K562 (cell line): ENCODE measurements at regions of chr17 and their contacts with region 1.

Region 1: DNA sequence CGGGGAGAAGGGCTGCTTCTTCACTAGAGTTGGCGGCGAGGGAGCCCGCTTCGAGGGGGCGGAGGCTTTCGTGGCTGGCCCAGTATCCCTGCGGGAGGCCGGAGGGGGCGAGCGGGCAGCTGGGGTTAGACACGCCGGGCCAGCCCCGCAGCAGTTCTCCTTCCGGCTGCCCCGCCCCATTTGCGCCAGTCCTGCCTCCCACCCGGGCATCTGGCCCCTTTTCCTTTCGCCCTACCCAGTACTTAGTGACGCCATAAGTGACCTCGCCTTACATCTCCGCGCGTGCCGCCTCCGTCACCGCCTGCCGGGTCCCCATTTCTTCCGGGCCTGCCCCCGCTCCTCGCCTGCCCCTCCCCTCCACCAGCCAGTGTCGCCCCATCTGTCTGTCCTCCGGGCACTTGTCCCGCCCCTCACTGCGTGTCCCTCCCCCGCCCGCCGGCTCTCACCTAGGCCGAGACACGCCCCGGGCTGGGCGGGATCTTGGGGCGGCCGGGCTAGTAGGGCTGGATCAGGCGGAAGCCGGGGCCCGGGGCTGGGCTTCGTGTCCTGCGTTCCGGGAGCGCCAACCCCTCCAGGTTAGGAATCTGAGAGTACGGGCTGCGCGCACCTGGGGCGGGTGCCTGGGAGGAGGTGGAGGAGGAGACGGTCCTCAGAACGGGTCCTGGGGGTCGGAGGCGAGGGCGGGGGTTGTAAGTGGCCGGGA is 14.3 kb downstream of the SPATA32 start:
- DNase-seq: peak; percentile 97 to 99 (median 98)
- ATAC-seq: peak; percentile 94
- H3K4me3 ChIP-seq: peak overlapping the region; percentile 78
- H3K27ac ChIP-seq: peak overlapping the region; percentile 78
- H3K4me1 ChIP-seq: peaks cover 33 to 65% of the 10 kb centered on the region in 2 experiments
- H3K27me3 ChIP-seq: no peaks in the 10 kb centered on the region
- CTCF ChIP-seq: no peak
- EP300 ChIP-seq: no peak
- POLR2A ChIP-seq: peak; percentile 90
- RAD21 ChIP-seq: no peak

Region 2: GRCh38 chr17:45260204-45260783 is 12.7 kb after region 1 on chr17:
- CTCF ChIA-PET with region 1: no interaction called
- POLR2A ChIA-PET with region 1: interaction called, 10 read pairs
- in situ Hi-C with region 1: no loop called
- intact Hi-C with region 1: no loop called
- DNase-seq: no peak
- ATAC-seq: no peak
- H3K4me3 ChIP-seq: no peak overlapping the region
- H3K27ac ChIP-seq: no peak overlapping the region
- H3K4me1 ChIP-seq: peaks cover 5 to 37% of the 10 kb centered on the region in 2 experiments; a peak in 3 of 5 replicates
- H3K27me3 ChIP-seq: no peaks in the 10 kb centered on the region
- CTCF ChIP-seq: no peak
- EP300 ChIP-seq: no peak
- POLR2A ChIP-seq: no peak
- RAD21 ChIP-seq: no peak

Region 3: GRCh38 chr17:45440155-45440778 is 192.7 kb after region 1 on chr17:
- CTCF ChIA-PET with region 1: no interaction called
- POLR2A ChIA-PET with region 1: no interaction called
- in situ Hi-C with region 1: no loop called
- intact Hi-C with region 1: no loop called
- DNase-seq: peak in 2 of 4 experiments; percentile 18 to 21
- ATAC-seq: peak; percentile 40; the same call in 1 of the 3 replicates
- H3K4me3 ChIP-seq: no peak overlapping the region
- H3K27ac ChIP-seq: no peak overlapping the region
- H3K4me1 ChIP-seq: peaks cover 0 to 12% of the 10 kb centered on the region in 2 experiments; a peak in 2 of 5 replicates
- H3K27me3 ChIP-seq: no peaks in the 10 kb centered on the region
- CTCF ChIP-seq: no peak
- EP300 ChIP-seq: no peak
- POLR2A ChIP-seq: no peak
- RAD21 ChIP-seq: no peak

Region 4: GRCh38 chr17:45942284-45942683 is 694.7 kb after region 1 on chr17:
- CTCF ChIA-PET with region 1: no interaction called
- POLR2A ChIA-PET with region 1: no interaction called
- in situ Hi-C with region 1: no loop called
- intact Hi-C with region 1: no loop called
- DNase-seq: no peak
- ATAC-seq: no peak
- H3K4me3 ChIP-seq: no peak overlapping the region
- H3K27ac ChIP-seq: no peak overlapping the region
- H3K4me1 ChIP-seq: no peaks in the 10 kb centered on the region
- H3K27me3 ChIP-seq: peaks cover 41 to 48% of the 10 kb centered on the region in 2 experiments; a peak in 4 of 5 replicates
- CTCF ChIP-seq: no peak
- EP300 ChIP-seq: no peak
- POLR2A ChIP-seq: no peak
- RAD21 ChIP-seq: no peak